CD8-positive, alpha-beta T cell (primary cell): ENCODE measurements at regions of chr5 and their contacts with region 1.

Region 1: DNA sequence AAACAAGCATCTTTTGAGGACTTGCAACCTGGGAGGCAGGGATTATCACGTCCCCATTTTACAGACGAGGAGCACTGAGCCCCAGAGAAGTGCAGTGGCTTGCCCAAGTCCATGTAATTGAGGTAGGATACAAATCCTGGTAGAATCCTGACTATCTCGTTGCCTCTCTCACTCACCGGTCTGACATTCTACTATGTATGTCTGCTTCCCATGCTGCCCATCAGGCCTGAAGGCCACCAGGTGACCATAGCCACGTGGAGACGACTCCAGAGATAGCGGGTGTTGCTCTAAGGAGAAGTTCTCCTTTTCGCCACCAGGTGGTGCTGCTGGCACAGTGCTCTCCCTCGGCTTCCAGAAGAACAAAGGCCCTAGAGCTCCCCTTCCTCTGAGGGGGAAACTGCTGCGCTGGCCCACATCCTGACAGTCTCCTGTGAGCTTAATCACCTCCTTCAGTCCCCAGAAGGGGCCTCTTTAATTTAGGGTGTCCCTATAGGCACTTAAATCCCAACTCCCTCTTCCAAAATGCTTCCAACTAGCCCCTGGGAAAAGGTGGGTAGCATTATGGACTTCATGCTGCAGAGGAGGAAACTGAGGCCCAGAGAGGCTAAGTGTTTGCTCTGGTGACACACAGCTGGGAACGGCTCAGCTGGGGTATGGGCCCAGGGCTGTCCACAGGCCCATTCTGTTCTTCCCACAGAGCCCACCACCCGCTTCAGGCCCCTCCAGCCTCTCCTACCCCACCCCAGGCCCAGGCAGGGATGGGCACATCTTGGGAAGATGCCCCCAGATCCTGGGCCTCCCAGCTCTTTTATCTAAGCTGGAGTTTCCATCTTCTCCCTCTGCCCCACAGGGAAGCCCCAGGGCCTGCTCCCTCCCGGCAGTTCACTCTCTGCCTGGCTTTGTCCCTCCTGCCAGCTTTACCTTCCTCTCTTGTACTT is 6.4 kb downstream of the SLC34A1 start:
- DNase-seq: peak; percentile 76 to 94 (median 88)
- ATAC-seq: peak; percentile 78
- H3K4me3 ChIP-seq: no peak overlapping the region
- H3K4me3 Mint-ChIP-seq: peak overlapping the region; percentile 55
- H3K27ac ChIP-seq: peak overlapping the region in 1 of 2 experiments; percentile 85
- H3K27ac Mint-ChIP-seq: peak overlapping the region; percentile 90
- H3K4me1 ChIP-seq: peaks cover 43% of the 10 kb centered on the region
- H3K4me1 Mint-ChIP-seq: peaks cover 35% of the 10 kb centered on the region
- H3K27me3 ChIP-seq: no peaks in the 10 kb centered on the region
- H3K27me3 Mint-ChIP-seq: no peaks in the 10 kb centered on the region
- CTCF ChIP-seq: peak; percentile 87

Region 2: GRCh38 chr5:177311723-177312648 is 78.6 kb before region 1 on chr5 and contains the start of gene MXD3:
- CTCF ChIA-PET with region 1: interaction called, 75 read pairs
- POLR2A ChIA-PET with region 1: interaction called, 4 read pairs
- intact Hi-C with region 1: no loop called
- DNase-seq: peak; percentile 88 to 96 (median 94)
- ATAC-seq: peak; percentile 91
- H3K4me3 ChIP-seq: peak within 1 kb of the TSS; percentile 63 to 79
- H3K4me3 Mint-ChIP-seq: peak within 1 kb of the TSS; percentile 80
- H3K27ac ChIP-seq: peak within 1 kb of the TSS in 1 of 2 experiments; percentile 58
- H3K27ac Mint-ChIP-seq: peak within 1 kb of the TSS; percentile 49
- H3K4me1 ChIP-seq: peaks cover 36% of the 10 kb centered on the region
- H3K4me1 Mint-ChIP-seq: peaks cover 25% of the 10 kb centered on the region
- H3K27me3 ChIP-seq: no peaks in the 10 kb centered on the region
- H3K27me3 Mint-ChIP-seq: peaks cover 2% of the 10 kb centered on the region
- CTCF ChIP-seq: no peak
- total RNA-seq, gene MXD3: 6.2 to 8.5 TPM

Region 3: DNA sequence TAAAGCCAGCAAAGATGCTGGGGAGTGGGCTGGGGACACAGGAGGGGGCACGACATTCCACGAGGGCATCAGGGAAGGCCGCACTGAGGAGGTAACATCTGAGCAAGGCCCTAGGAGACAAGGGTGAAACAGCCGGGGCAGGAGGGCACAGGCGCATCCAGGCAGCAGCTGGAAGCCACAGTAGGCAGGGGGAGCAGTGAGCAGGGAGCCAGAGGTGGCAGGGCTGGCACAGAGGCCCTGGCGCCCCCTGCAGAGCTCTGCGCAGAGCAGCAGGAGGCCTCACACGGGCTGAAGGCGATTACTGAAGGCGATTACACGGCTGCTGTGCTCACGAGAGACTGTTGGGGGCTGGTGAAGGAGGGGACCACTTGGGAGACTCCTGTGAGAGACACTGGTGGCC is 54.5 kb before region 1 on chr5:
- CTCF ChIA-PET with region 1: no interaction called
- POLR2A ChIA-PET with region 1: no interaction called
- intact Hi-C with region 1: no loop called
- DNase-seq: peak in 2 of 9 experiments; percentile 42 to 50
- ATAC-seq: peak; percentile 62
- H3K4me3 ChIP-seq: no peak overlapping the region
- H3K4me3 Mint-ChIP-seq: no peak overlapping the region
- H3K27ac ChIP-seq: no peak overlapping the region
- H3K27ac Mint-ChIP-seq: no peak overlapping the region
- H3K4me1 ChIP-seq: peaks cover 13% of the 10 kb centered on the region
- H3K4me1 Mint-ChIP-seq: peaks cover 21% of the 10 kb centered on the region
- H3K27me3 ChIP-seq: no peaks in the 10 kb centered on the region
- H3K27me3 Mint-ChIP-seq: no peaks in the 10 kb centered on the region
- CTCF ChIP-seq: no peak

Region 4: GRCh38 chr5:177362610-177363507 is 27.8 kb before region 1 on chr5:
- CTCF ChIA-PET with region 1: interaction called, 77 read pairs
- POLR2A ChIA-PET with region 1: interaction called, 3 read pairs
- intact Hi-C with region 1: no loop called
- DNase-seq: peak; percentile 31 to 92 (median 67)
- ATAC-seq: peak; percentile 74
- H3K4me3 ChIP-seq: peak overlapping the region; percentile 47 to 54
- H3K4me3 Mint-ChIP-seq: peak overlapping the region; percentile 84
- H3K27ac ChIP-seq: peak overlapping the region; percentile 46 to 70
- H3K27ac Mint-ChIP-seq: peak overlapping the region; percentile 89
- H3K4me1 ChIP-seq: peaks cover 70% of the 10 kb centered on the region
- H3K4me1 Mint-ChIP-seq: peaks cover 67% of the 10 kb centered on the region
- H3K27me3 ChIP-seq: no peaks in the 10 kb centered on the region
- H3K27me3 Mint-ChIP-seq: no peaks in the 10 kb centered on the region
- CTCF ChIP-seq: no peak

Region 5: DNA sequence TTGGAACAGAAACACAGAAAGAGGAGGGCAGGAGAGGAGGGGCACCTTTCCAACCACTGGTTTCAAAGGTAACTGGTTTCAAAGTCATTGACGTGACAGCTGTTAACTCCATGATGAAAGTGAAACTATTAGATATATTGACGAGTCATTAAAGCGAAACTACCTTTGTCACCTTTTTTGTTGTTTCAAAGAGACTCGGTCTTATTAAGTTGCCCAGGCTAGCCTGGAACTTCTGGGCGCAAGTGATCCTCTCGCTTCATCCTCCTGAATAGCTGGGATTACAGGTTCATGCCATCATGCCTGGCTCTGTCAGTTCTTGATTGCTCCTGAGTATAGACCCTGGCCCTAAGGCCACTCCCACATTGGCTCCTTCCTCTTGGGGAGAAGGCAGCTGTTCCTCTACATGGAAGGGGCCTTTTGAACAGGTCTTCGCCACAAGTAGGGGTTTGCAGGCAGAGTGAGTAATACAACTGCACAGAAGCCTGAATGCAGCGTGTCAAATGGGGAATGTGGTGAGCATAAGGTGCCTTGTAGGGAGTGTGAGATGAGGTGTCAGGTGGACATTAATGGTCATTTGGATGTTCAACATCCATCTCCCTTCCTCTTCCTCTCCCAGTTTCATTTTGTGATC is 22.1 kb after region 1 on chr5:
- CTCF ChIA-PET with region 1: interaction called, 24 read pairs
- POLR2A ChIA-PET with region 1: no interaction called
- intact Hi-C with region 1: no loop called
- DNase-seq: peak in 2 of 9 experiments; percentile 64 to 81
- ATAC-seq: peak; percentile 55
- H3K4me3 ChIP-seq: peak overlapping the region in 1 of 2 experiments; percentile 32
- H3K4me3 Mint-ChIP-seq: peak overlapping the region; percentile 72
- H3K27ac ChIP-seq: peak overlapping the region in 1 of 2 experiments; percentile 75
- H3K27ac Mint-ChIP-seq: peak overlapping the region; percentile 79
- H3K4me1 ChIP-seq: peaks cover 17% of the 10 kb centered on the region
- H3K4me1 Mint-ChIP-seq: peaks cover 37% of the 10 kb centered on the region
- H3K27me3 ChIP-seq: no peaks in the 10 kb centered on the region
- H3K27me3 Mint-ChIP-seq: no peaks in the 10 kb centered on the region
- CTCF ChIP-seq: no peak

Region 6: DNA sequence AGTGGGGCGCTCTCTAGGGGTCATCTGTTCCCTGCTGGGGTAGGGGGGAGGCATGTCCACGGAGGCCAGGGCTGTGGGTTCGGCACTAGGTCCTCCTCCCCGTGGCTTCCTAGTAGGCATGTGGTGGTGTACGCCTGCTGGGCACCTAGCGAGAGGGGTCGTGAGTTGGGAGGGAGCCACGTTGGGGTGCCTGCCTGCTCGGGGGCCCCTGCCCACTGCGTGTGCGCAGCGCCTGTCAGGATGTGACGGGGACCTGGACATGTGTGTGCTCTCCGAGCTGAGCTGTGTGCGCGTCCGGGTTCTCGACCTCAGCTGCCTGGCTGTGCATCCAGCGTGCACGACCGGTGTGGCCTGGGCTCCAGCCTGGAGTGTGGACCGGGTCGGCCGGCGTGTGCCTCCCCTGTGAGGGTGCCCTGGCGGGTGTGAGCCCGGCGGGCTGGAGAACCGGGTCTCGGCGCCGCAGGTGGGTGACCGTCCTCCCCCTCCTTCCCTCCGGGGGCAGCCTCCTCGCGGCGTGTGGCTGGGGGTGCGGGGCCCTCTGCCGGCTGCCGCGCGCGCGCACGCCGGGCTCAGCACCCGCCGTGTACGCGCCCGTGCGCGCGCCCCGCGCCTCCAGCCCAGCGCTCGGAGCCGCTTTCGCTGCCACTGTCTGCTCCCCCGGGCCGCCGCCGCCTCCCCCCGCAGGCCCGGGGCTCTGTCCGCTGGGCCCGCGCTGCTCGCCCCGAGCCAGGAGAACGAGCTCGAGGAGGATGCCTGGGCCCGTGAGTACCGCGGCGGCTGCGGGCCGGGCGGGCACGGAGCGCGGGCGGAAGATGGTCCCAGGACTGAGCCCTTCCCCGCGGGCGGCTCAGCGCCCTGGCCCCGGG is 55.8 kb after region 1 on chr5 and contains the start of gene PRR7:
- CTCF ChIA-PET with region 1: interaction called, 341 read pairs
- POLR2A ChIA-PET with region 1: interaction called, 22 read pairs
- intact Hi-C with region 1: no loop called
- DNase-seq: peak; percentile 51 to 93 (median 75)
- ATAC-seq: peak; percentile 54
- H3K4me3 ChIP-seq: peak within 1 kb of the TSS; percentile 56 to 61
- H3K4me3 Mint-ChIP-seq: peak within 1 kb of the TSS; percentile 79
- H3K27ac ChIP-seq: peak within 1 kb of the TSS; percentile 61 to 84
- H3K27ac Mint-ChIP-seq: peak within 1 kb of the TSS; percentile 95
- H3K4me1 ChIP-seq: peaks cover 33% of the 10 kb centered on the region
- H3K4me1 Mint-ChIP-seq: peaks cover 44% of the 10 kb centered on the region
- H3K27me3 ChIP-seq: no peaks in the 10 kb centered on the region
- H3K27me3 Mint-ChIP-seq: no peaks in the 10 kb centered on the region
- CTCF ChIP-seq: no peak
- total RNA-seq, gene PRR7: 21.0 TPM

Region 7: GRCh38 chr5:177509381-177509951 is 118.8 kb after region 1 on chr5 and contains the start of gene DOK3:
- CTCF ChIA-PET with region 1: interaction called, 202 read pairs
- POLR2A ChIA-PET with region 1: no interaction called
- intact Hi-C with region 1: no loop called
- DNase-seq: no peak
- ATAC-seq: no peak
- H3K4me3 ChIP-seq: no peak within 1 kb of the TSS
- H3K4me3 Mint-ChIP-seq: peak within 1 kb of the TSS; percentile 32
- H3K27ac ChIP-seq: no peak within 1 kb of the TSS
- H3K27ac Mint-ChIP-seq: no peak within 1 kb of the TSS
- H3K4me1 ChIP-seq: no peaks in the 10 kb centered on the region
- H3K4me1 Mint-ChIP-seq: peaks cover 5% of the 10 kb centered on the region
- H3K27me3 ChIP-seq: no peaks in the 10 kb centered on the region
- H3K27me3 Mint-ChIP-seq: no peaks in the 10 kb centered on the region
- CTCF ChIP-seq: no peak
- total RNA-seq, gene DOK3: 1.1 to 1.2 TPM

Region 8: GRCh38 chr5:178434851-178435250 is 1044.2 kb after region 1 on chr5:
- CTCF ChIA-PET with region 1: no interaction called
- POLR2A ChIA-PET with region 1: no interaction called
- intact Hi-C with region 1: no loop called
- DNase-seq: peak in 1 of 9 experiments; percentile 21
- ATAC-seq: no peak
- H3K4me3 ChIP-seq: no peak overlapping the region
- H3K4me3 Mint-ChIP-seq: no peak overlapping the region
- H3K27ac ChIP-seq: no peak overlapping the region
- H3K27ac Mint-ChIP-seq: no peak overlapping the region
- H3K4me1 ChIP-seq: no peaks in the 10 kb centered on the region
- H3K4me1 Mint-ChIP-seq: no peaks in the 10 kb centered on the region
- H3K27me3 ChIP-seq: no peaks in the 10 kb centered on the region
- H3K27me3 Mint-ChIP-seq: no peaks in the 10 kb centered on the region
- CTCF ChIP-seq: no peak